ENCODE measurements at regions of chr5 and their contacts with region 1.

Region 1: DNA sequence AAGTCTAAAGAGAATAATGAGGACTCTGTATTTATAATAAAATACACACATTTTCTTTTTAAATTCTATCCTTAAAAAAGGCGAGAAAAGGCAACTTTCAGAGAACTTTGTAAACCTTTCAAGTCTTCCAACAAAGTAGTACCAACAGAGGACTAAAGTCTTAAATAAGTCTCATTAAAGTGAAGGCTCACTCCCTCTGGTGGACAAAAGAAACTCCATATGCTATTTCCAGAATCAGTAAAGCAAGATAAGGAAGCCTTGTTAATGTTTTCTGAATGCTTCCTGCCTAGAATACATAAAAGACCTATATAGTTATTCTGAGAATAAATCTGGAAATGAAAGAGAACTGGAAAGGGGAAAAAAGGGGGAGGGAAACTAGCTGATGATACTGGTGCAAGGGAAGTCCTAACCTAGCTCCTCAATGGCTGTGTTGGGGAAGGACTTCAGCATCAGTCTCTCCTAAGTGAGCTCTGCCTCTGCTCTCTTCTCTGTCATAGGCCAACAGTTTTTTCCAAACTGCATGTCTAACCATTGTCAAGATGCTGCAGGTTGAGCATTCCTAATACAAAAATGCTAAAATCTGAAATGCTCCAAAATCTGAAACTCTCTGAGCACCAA is 7.2 kb downstream of the HMGCS1 start:
- DNase-seq: peak; percentile 23
- CTCF ChIP-seq: peak; percentile 54

Region 2: GRCh38 chr5:42570966-42571960 is 734.8 kb before region 1 on chr5:
- in situ Hi-C with region 1: no loop called
- DNase-seq: no peak
- CTCF ChIP-seq: no peak

Region 3: GRCh38 chr5:43120720-43121564 is 185.1 kb before region 1 on chr5 and contains the start of gene ZNF131:
- in situ Hi-C with region 1: loop called (anchors 10 kb)
- DNase-seq: peak; percentile 96
- CTCF ChIP-seq: no peak